ENCODE measurements at regions of chr21 and their contacts with region 1.

Region 1: GRCh38 chr21:14092834-14093560 is 117.8 kb downstream of the LIPI start:
- DNase-seq: no peak
- ATAC-seq: no peak
- H3K4me3 ChIP-seq: no peak overlapping the region
- H3K4me3 Mint-ChIP-seq: no peak overlapping the region
- H3K27ac ChIP-seq: no peak overlapping the region
- H3K27ac Mint-ChIP-seq: no peak overlapping the region
- H3K4me1 ChIP-seq: no peaks in the 10 kb centered on the region
- H3K4me1 Mint-ChIP-seq: no peaks in the 10 kb centered on the region
- H3K27me3 ChIP-seq: no peaks in the 10 kb centered on the region
- H3K27me3 Mint-ChIP-seq: no peaks in the 10 kb centered on the region
- CTCF ChIP-seq: no peak

Region 2: GRCh38 chr21:14054682-14055081 is 38.3 kb before region 1 on chr21:
- CTCF ChIA-PET with region 1: no interaction called
- POLR2A ChIA-PET with region 1: no interaction called
- intact Hi-C with region 1: loop called in 1 of 2 experiments (anchors 5 kb)
- DNase-seq: no peak
- ATAC-seq: no peak
- H3K4me3 ChIP-seq: no peak overlapping the region
- H3K4me3 Mint-ChIP-seq: no peak overlapping the region
- H3K27ac ChIP-seq: no peak overlapping the region
- H3K27ac Mint-ChIP-seq: no peak overlapping the region
- H3K4me1 ChIP-seq: no peaks in the 10 kb centered on the region
- H3K4me1 Mint-ChIP-seq: no peaks in the 10 kb centered on the region
- H3K27me3 ChIP-seq: no peaks in the 10 kb centered on the region
- H3K27me3 Mint-ChIP-seq: no peaks in the 10 kb centered on the region
- CTCF ChIP-seq: no peak